ENCODE measurements at regions of chr10 and their contacts with region 1.

Region 1: DNA sequence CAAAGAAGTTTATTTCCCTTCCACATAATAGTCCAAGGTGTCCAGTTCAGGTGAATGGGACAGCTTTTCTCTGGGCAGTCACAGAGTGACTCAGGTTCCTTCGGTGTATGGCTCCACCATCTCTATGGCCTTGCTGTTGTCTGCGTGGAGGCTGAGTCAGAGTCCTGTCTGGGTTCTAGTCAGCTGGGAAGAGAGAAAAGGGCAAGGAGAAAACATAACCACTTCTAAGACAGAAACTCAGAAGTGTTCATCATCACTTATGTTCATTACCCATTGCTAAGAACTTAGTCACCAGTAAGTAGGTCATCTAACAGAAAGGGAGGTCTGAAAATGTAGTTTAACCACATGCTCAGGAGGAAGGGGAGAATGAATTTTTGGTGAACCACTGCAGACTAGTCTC is 32.4 kb upstream of the CCDC7 start:
- DNase-seq: peak; percentile 99
- H3K4me3 ChIP-seq: no peak overlapping the region
- H3K27ac ChIP-seq: peak overlapping the region; percentile 66
- H3K4me1 ChIP-seq: peaks cover 16% of the 10 kb centered on the region
- H3K27me3 ChIP-seq: no peaks in the 10 kb centered on the region
- CTCF ChIP-seq: no peak

Region 2: GRCh38 chr10:32295027-32295426 is 118.5 kb before region 1 on chr10:
- CTCF ChIA-PET with region 1: no interaction called
- dilution Hi-C with region 1: no loop called
- in situ Hi-C with region 1: no loop called
- intact Hi-C with region 1: no loop called
- DNase-seq: no peak
- H3K4me3 ChIP-seq: no peak overlapping the region
- H3K27ac ChIP-seq: no peak overlapping the region
- H3K4me1 ChIP-seq: peaks cover 7% of the 10 kb centered on the region
- H3K27me3 ChIP-seq: no peaks in the 10 kb centered on the region
- CTCF ChIP-seq: no peak

Region 3: GRCh38 chr10:32445740-32446535 is 32.4 kb after region 1 on chr10 and contains the start of gene CCDC7:
- CTCF ChIA-PET with region 1: no interaction called
- dilution Hi-C with region 1: no loop called
- in situ Hi-C with region 1: no loop called
- intact Hi-C with region 1: loop called (anchors 2 kb)
- DNase-seq: peak; percentile 90
- H3K4me3 ChIP-seq: peak within 1 kb of the TSS; percentile 65 to 99 (median 78)
- H3K27ac ChIP-seq: peak within 1 kb of the TSS; percentile 89
- H3K4me1 ChIP-seq: no peaks in the 10 kb centered on the region
- H3K27me3 ChIP-seq: no peaks in the 10 kb centered on the region
- CTCF ChIP-seq: peak in 1 of 2 donors; percentile 14
- total RNA-seq, gene CCDC7: 2.7 to 4.2 TPM

Region 4: GRCh38 chr10:32471232-32471631 is 57.7 kb after region 1 on chr10:
- CTCF ChIA-PET with region 1: no interaction called
- dilution Hi-C with region 1: no loop called
- in situ Hi-C with region 1: no loop called
- intact Hi-C with region 1: no loop called
- DNase-seq: no peak
- H3K4me3 ChIP-seq: no peak overlapping the region
- H3K27ac ChIP-seq: no peak overlapping the region
- H3K4me1 ChIP-seq: no peaks in the 10 kb centered on the region
- H3K27me3 ChIP-seq: no peaks in the 10 kb centered on the region
- CTCF ChIP-seq: no peak